Naive thymus-derived CD4-positive, alpha-beta T cell (primary cell): ENCODE measurements at regions of chr11 and their contacts with region 1.

Region 1: DNA sequence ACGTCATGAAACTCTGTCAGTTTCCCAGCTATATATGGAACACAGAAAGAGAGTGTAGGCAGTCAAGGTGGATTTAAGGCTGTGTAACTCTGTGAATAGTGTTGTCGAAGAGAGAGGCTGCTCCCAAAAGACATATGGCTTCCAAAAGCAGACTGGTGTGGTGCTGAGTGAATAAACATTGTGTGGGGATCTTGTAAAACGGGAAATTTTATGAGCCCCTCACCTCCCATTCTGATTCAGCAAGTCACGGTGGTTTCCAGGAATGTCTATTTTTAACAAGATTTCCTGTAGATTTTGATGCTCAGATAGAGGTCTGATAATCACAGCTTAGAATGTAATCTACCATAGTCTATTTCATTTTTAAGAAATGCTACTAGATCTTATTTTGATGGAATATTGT is 67.9 kb downstream of the SESN3 start:
- DNase-seq: no peak
- ATAC-seq: no peak
- H3K4me3 ChIP-seq: no peak overlapping the region
- H3K4me3 Mint-ChIP-seq: peak overlapping the region in 1 of 10 donors; percentile 3
- H3K27ac ChIP-seq: no peak overlapping the region
- H3K27ac Mint-ChIP-seq: peak overlapping the region in 7 of 9 donors; percentile 13 to 85 (median 57)
- H3K4me1 ChIP-seq: peaks cover 2% of the 10 kb centered on the region in 2 donors
- H3K4me1 Mint-ChIP-seq: peaks cover 8 to 38% (median 25%) of the 10 kb centered on the region in 7 donors
- H3K27me3 ChIP-seq: no peaks in the 10 kb centered on the region
- H3K27me3 Mint-ChIP-seq: no peaks in the 10 kb centered on the region

Region 2: DNA sequence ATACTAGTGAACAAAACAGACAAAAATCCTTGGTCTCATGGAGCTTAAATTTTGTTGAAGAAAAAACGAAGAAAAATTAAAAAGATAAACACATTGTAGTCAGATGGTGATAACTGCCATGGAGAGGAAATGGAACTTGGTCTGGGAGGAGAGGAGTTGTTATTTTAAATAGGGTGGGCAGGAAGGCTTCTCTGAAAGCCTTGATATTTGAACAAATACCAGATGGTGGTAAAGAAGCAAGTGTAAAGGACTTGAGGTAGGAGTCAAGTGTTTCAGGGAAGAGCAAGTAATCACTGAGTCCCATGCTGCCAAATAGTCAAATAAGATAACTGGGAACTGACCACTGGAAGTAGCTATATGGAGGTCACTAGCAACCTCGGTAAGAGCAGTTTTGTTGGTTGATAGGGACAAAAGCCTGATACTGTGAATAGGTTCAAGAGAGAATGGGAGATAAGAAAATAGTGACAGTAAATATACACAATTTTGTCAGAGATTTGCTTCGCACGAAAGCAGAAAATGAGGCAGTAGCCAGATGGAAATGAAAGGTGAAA is 12.8 kb after region 1 on chr11:
- CTCF ChIA-PET with region 1: no interaction called
- POLR2A ChIA-PET with region 1: interaction called, 4 read pairs
- intact Hi-C with region 1: loop called in 1 of 2 experiments (anchors 1 kb)
- DNase-seq: no peak
- ATAC-seq: no peak
- H3K4me3 ChIP-seq: no peak overlapping the region
- H3K4me3 Mint-ChIP-seq: no peak overlapping the region
- H3K27ac ChIP-seq: no peak overlapping the region
- H3K27ac Mint-ChIP-seq: peak overlapping the region in 5 of 9 donors; percentile 1 to 75 (median 63)
- H3K4me1 ChIP-seq: no peaks in the 10 kb centered on the region
- H3K4me1 Mint-ChIP-seq: peaks cover 0 to 7% (median 0%) of the 10 kb centered on the region in 7 donors
- H3K27me3 ChIP-seq: no peaks in the 10 kb centered on the region
- H3K27me3 Mint-ChIP-seq: no peaks in the 10 kb centered on the region